ENCODE measurements at regions of chr3 and their contacts with region 1.

Region 1: DNA sequence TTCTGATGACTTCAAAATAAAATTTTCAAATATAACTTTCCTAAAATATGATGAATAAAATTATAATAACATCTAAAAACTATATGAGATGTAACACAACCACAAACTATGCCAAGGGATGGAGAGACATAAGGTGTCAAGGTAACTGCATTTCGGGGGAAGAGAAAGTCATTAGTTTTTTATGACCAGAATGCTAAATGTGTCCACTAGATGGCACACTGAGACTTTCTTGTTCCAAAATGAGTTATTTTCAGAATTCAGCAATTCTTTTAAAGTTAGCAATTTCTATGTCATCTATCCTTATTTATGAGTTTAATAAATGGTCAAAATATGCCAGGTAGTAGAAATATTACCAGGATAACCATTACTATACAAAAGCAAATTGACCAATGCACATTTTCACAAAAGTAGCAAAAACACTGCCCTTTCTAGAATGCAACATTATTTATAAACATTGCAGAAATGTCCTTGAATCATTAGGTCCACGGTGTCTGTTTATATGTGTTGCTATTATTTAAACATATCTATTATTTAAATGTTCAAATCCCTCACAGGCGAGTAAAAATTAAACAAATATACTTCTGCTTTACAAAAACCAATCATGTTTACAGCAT is 374.2 kb downstream of the PLCL2 start:
- DNase-seq: no peak
- H3K4me3 ChIP-seq: no peak overlapping the region
- H3K27ac ChIP-seq: peak overlapping the region in 1 of 59 donors; percentile 10
- H3K27me3 ChIP-seq: no peaks in the 10 kb centered on the region
- CTCF ChIP-seq: peak; percentile 59 to 97 (median 87)

Region 2: GRCh38 chr3:17412950-17413530 is 154.1 kb after region 1 on chr3:
- intact Hi-C with region 1: loop called (anchors 2 to 5 kb)
- DNase-seq: no peak
- H3K4me3 ChIP-seq: no peak overlapping the region
- H3K27ac ChIP-seq: no peak overlapping the region
- H3K27me3 ChIP-seq: no peaks in the 10 kb centered on the region
- CTCF ChIP-seq: peak; percentile 53 to 90 (median 73)

Region 3: DNA sequence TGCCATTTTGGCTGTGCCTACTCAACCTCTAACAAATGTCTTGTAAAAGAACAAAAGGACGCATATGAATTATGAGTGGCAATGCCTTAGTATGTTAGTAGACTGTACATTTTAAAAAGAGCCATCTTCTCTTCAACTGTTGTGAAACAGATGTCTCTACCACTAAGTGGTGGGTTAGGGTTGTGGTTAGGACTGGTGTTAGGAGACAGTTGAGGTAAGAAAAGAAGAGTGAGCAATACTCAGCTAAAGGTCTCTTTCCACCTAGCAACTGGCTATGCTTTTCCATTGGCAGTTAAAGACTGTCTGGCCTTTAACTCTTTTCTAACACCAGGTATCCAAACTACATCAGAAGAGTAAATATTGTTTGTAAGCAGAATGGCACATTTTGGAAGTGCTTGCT is 705.2 kb after region 1 on chr3:
- intact Hi-C with region 1: loop called in 1 of 2 experiments (anchors 10 kb)
- DNase-seq: no peak
- H3K4me3 ChIP-seq: no peak overlapping the region
- H3K27ac ChIP-seq: no peak overlapping the region
- H3K27me3 ChIP-seq: peaks cover 0 to 3% (median 0%) of the 10 kb centered on the region in 45 donors
- CTCF ChIP-seq: no peak

Measured in dorsolateral prefrontal cortex (tissue), 120 donors.